Calu3 (cell line): ENCODE measurements at regions of chr4 and their contacts with region 1.

Region 1: GRCh38 chr4:170198747-170199146 is 109.0 kb upstream of the AADAT start:
- DNase-seq: no peak
- H3K4me3 Mint-ChIP-seq: no peak overlapping the region
- H3K27ac Mint-ChIP-seq: no peak overlapping the region
- H3K4me1 Mint-ChIP-seq: no peaks in the 10 kb centered on the region
- H3K27me3 Mint-ChIP-seq: no peaks in the 10 kb centered on the region
- CTCF ChIP-seq: no peak

Region 2: DNA sequence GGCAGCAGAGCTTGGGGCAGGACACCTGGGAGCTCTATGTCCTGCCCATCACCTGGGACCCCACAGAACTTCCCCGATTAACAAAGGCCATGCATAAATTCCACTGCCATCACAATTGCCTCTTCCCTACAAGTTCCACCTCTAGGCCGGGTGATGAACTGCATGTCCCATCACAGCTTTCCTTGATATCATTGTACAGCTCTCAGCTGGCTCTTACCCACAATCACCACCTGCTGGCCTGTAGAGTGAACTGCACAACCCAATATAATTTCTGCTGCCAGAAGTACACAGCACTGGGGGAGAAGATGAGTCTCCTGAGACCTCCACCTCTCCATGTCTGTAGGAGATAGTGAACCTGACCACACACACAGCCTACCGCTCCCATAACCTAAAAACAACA is 176.0 kb after region 1 on chr4:
- CTCF ChIA-PET with region 1: interaction called, 3 read pairs
- intact Hi-C with region 1: loop called (anchors 10 kb)
- DNase-seq: peak; percentile 41
- H3K4me3 Mint-ChIP-seq: no peak overlapping the region
- H3K27ac Mint-ChIP-seq: no peak overlapping the region
- H3K4me1 Mint-ChIP-seq: no peaks in the 10 kb centered on the region
- H3K27me3 Mint-ChIP-seq: no peaks in the 10 kb centered on the region
- CTCF ChIP-seq: peak; percentile 43

Region 3: GRCh38 chr4:170497112-170497511 is 298.4 kb after region 1 on chr4:
- CTCF ChIA-PET with region 1: interaction called, 5 read pairs
- intact Hi-C with region 1: loop called (anchors 5 kb)
- DNase-seq: peak; percentile 38
- H3K4me3 Mint-ChIP-seq: peak overlapping the region; percentile 76
- H3K27ac Mint-ChIP-seq: peak overlapping the region; percentile 67
- H3K4me1 Mint-ChIP-seq: no peaks in the 10 kb centered on the region
- H3K27me3 Mint-ChIP-seq: no peaks in the 10 kb centered on the region
- CTCF ChIP-seq: no peak